ENCODE measurements at regions of chr12 and their contacts with region 1.

Region 1: DNA sequence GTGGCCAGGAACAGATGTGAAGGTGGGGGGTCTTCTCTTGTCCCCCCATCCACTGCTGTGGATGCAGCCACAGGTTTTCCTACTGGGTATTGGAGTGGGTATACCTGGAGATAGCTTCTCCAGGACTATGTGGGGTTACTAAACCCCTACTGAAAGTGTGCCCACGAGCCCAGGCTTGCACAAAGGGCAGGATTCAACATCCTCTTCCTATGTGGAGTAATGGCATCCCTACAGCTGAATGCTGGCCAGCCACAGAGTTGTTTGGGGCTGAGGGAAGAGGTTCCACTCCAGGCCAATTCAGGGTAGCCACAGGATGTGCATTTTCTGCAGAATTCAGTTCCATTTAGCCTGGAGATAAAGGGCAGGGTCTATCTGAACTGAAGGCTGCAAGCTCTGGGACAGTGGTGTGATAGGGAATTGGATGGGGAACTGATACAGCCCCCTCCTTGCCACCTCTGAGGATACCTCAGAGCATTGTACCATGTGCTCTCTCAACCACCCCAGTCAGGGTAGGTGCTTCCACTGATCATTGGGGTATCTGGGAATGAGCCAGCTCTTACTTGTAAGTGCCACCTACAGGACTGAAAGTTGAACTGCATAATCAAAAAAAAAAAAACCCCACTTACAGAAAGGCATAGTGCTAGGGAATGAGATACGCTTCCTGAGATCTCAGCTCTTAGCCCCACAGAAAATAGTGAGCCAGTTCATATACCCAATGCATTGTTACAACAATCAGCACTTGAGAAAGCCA is 187.1 kb downstream of the KITLG start:
- DNase-seq: peak in 1 of 2 experiments; percentile 4
- H3K4me3 ChIP-seq: no peak overlapping the region
- H3K4me3 Mint-ChIP-seq: no peak overlapping the region
- H3K27ac Mint-ChIP-seq: no peak overlapping the region
- H3K4me1 ChIP-seq: no peaks in the 10 kb centered on the region
- H3K4me1 Mint-ChIP-seq: no peaks in the 10 kb centered on the region
- H3K27me3 ChIP-seq: no peaks in the 10 kb centered on the region
- H3K27me3 Mint-ChIP-seq: no peaks in the 10 kb centered on the region
- CTCF ChIP-seq: peak; percentile 30 to 38

Region 2: GRCh38 chr12:88153959-88154358 is 239.2 kb before region 1 on chr12:
- CTCF ChIA-PET with region 1: no interaction called
- POLR2A ChIA-PET with region 1: no interaction called
- intact Hi-C with region 1: loop called (anchors 5 kb)
- DNase-seq: peak in 1 of 2 experiments; percentile 27
- H3K4me3 ChIP-seq: no peak overlapping the region
- H3K4me3 Mint-ChIP-seq: no peak overlapping the region
- H3K27ac Mint-ChIP-seq: no peak overlapping the region
- H3K4me1 ChIP-seq: no peaks in the 10 kb centered on the region
- H3K4me1 Mint-ChIP-seq: no peaks in the 10 kb centered on the region
- H3K27me3 ChIP-seq: no peaks in the 10 kb centered on the region
- H3K27me3 Mint-ChIP-seq: no peaks in the 10 kb centered on the region
- CTCF ChIP-seq: peak in 1 of 2 experiments; percentile 47

Region 3: DNA sequence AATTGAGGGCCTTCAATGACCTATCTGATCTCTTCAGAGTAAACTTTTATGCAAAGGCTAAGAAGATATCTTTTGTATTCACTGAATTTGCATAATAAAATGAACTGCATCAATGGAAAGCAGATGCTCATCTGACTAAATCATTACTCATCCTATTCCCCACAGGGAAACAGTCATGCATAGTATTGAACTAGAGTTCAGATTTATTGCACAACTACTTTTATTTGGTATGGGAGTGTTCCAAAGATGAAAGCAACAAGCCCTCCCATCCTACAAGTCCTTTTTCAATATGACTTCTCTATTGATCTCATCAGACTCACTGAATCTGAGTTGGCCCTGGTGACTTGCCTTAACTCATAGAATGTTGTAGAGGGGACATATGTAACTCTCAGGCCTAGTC is 27.3 kb after region 1 on chr12:
- CTCF ChIA-PET with region 1: no interaction called
- POLR2A ChIA-PET with region 1: no interaction called
- intact Hi-C with region 1: no loop called
- DNase-seq: no peak
- H3K4me3 ChIP-seq: no peak overlapping the region
- H3K4me3 Mint-ChIP-seq: no peak overlapping the region
- H3K27ac Mint-ChIP-seq: no peak overlapping the region
- H3K4me1 ChIP-seq: no peaks in the 10 kb centered on the region
- H3K4me1 Mint-ChIP-seq: peaks cover 4% of the 10 kb centered on the region
- H3K27me3 ChIP-seq: no peaks in the 10 kb centered on the region
- H3K27me3 Mint-ChIP-seq: no peaks in the 10 kb centered on the region
- CTCF ChIP-seq: no peak

Measured in Caco-2 (cell line).